PC-3 (cell line): ENCODE measurements at regions of chr2 and their contacts with region 1.

Region 1: GRCh38 chr2:220674033-220674432 is 898.1 kb downstream of the EPHA4 start:
- DNase-seq: no peak
- ATAC-seq: no peak
- H3K4me3 ChIP-seq: no peak overlapping the region
- H3K27ac ChIP-seq: no peak overlapping the region
- H3K4me1 ChIP-seq: no peaks in the 10 kb centered on the region
- H3K27me3 ChIP-seq: no peaks in the 10 kb centered on the region
- CTCF ChIP-seq: peak; percentile 25; the same call in 1 of the 2 replicates

Region 2: GRCh38 chr2:219783359-219783975 is 890.6 kb before region 1 on chr2:
- CTCF ChIA-PET with region 1: no interaction called
- POLR2A ChIA-PET with region 1: no interaction called
- intact Hi-C with region 1: no loop called
- DNase-seq: no peak
- ATAC-seq: no peak
- H3K4me3 ChIP-seq: no peak overlapping the region
- H3K27ac ChIP-seq: no peak overlapping the region
- H3K4me1 ChIP-seq: no peaks in the 10 kb centered on the region
- H3K27me3 ChIP-seq: 0 out of 2 replicates have a peak, but pooled peaks cover 14% of the 10 kb centered on the region
- CTCF ChIP-seq: no peak

Region 3: GRCh38 chr2:220394433-220394832 is 279.6 kb before region 1 on chr2:
- CTCF ChIA-PET with region 1: no interaction called
- POLR2A ChIA-PET with region 1: no interaction called
- intact Hi-C with region 1: loop called (anchors 5 kb)
- DNase-seq: peak; percentile 68
- ATAC-seq: no peak
- H3K4me3 ChIP-seq: no peak overlapping the region
- H3K27ac ChIP-seq: no peak overlapping the region
- H3K4me1 ChIP-seq: peaks cover 8% of the 10 kb centered on the region; the same call in 1 of the 2 replicates
- H3K27me3 ChIP-seq: no peaks in the 10 kb centered on the region
- CTCF ChIP-seq: no peak

Region 4: DNA sequence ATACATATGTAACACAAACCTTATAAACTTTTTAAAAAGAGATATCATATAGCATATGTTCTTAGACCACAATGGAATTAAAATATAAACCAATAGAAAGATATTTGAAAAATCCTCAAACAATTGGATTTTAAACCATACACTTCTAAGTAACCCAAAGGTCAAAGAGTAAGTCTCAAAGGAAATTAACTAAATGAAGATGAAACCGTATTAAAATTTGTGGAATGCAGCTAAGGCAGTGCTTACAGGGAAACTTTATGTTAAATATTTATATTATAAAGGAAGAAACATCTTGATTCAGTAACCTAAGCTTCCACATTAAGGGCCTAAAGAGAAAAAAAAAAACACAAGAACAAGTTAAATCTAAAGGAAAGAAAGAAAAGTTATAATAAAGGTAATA is 80.5 kb before region 1 on chr2:
- CTCF ChIA-PET with region 1: no interaction called
- POLR2A ChIA-PET with region 1: no interaction called
- intact Hi-C with region 1: no loop called
- DNase-seq: no peak
- ATAC-seq: no peak
- H3K4me3 ChIP-seq: no peak overlapping the region
- H3K27ac ChIP-seq: no peak overlapping the region
- H3K4me1 ChIP-seq: no peaks in the 10 kb centered on the region
- H3K27me3 ChIP-seq: no peaks in the 10 kb centered on the region
- CTCF ChIP-seq: no peak